ENCODE measurements at regions of chr1 and their contacts with region 1.

Region 1: GRCh38 chr1:1687846-1688245 is 4.7 kb downstream of the SLC35E2B start:
- DNase-seq: no peak
- ATAC-seq: no peak
- H3K4me3 ChIP-seq: no peak overlapping the region
- H3K4me3 Mint-ChIP-seq: no peak overlapping the region
- H3K27ac ChIP-seq: no peak overlapping the region
- H3K27ac Mint-ChIP-seq: no peak overlapping the region
- H3K4me1 ChIP-seq: peaks cover 5% of the 10 kb centered on the region
- H3K4me1 Mint-ChIP-seq: peaks cover 28% of the 10 kb centered on the region
- H3K27me3 ChIP-seq: no peaks in the 10 kb centered on the region
- H3K27me3 Mint-ChIP-seq: no peaks in the 10 kb centered on the region
- CTCF ChIP-seq: no peak

Region 2: DNA sequence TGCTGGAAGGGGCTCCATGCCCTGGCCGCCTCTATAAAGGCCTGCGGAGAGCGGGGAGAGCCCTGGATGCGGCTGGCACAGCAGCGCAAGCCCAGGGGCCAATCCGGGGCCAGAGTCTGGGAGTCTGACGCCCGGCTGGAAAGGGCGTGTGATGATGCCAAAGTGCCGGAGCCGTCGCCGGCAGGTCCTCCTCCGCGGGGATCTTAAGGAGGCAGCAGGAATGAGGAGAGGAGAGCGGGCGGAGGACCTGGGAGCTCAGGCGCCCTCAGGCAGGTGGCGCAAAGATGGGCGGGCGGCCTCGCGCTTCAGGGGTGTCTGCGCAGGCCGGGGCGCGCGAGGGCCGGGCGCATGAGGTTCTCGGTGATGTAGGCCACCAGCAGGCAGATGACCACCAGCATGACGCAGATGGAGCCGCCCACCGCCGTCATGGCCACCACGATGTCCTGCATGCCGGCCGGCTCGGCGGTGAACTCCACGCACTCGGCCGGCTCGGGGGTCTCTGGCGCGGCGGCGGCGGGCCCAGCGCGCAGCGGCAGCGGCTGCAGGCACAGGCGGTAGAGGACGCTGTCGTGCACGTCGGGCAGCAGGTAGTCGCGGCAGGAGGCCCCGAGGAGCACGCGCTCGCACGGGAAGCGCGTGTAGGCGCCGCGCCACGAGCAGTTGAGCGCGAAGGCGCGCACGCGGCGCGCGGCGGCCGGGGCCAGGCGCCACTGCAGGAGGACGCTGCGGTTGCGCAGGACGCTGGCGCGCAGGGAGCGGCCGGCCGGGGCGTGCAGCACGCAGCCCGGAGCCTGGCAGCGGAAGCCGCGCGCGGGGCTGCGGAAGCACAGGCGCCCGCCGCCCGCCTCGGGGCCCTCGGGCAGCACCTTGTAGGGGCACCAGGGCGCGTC is 88.6 kb before region 1 on chr1:
- CTCF ChIA-PET with region 1: no interaction called
- POLR2A ChIA-PET with region 1: no interaction called
- intact Hi-C with region 1: no loop called
- DNase-seq: peak in 5 of 9 experiments; percentile 33 to 72 (median 62)
- ATAC-seq: peak; percentile 60
- H3K4me3 ChIP-seq: no peak overlapping the region
- H3K4me3 Mint-ChIP-seq: peak overlapping the region; percentile 77
- H3K27ac ChIP-seq: no peak overlapping the region
- H3K27ac Mint-ChIP-seq: no peak overlapping the region
- H3K4me1 ChIP-seq: peaks cover 13% of the 10 kb centered on the region
- H3K4me1 Mint-ChIP-seq: peaks cover 9% of the 10 kb centered on the region
- H3K27me3 ChIP-seq: no peaks in the 10 kb centered on the region
- H3K27me3 Mint-ChIP-seq: no peaks in the 10 kb centered on the region
- CTCF ChIP-seq: no peak

Region 3: DNA sequence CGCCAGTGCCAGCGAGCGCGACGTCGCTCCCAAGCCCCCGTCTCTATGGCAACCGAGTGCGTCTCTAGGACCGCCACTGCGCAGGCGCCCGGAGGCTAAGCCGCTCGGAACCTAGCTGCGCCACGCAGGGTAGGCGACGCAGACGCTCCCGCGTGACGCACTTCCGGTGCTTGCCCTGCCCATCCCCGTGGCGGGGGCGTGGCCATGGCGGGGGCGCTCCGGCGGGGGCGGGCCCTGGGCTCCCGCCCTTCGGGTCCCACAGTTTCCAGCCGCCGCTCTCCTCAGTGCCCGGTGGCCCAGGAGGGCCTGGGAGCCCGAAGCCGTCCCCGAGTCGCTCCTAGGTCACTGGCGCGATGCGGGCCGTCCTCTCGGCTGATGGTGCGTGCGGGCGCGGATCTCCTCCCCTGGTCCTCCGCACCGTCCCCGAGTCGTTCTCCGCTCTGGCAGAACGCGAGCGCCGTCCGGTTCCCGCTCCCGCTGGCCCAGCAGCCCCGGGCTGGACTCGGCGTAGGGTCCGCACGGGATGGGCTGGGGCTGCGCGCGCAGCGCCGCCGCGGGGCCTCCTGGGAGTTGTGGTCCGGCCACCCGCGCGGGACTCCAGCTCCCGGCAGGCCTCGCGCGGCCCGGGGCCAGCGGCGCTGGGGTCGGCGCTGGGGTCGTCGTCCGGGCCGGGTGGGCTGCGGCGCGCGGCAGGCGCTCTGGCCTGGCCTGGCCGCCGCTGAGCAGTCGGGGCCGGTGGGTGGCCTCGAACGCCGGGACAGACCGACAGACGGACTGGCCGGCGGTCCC is 72.4 kb before region 1 on chr1 and contains the start of gene MIB2:
- CTCF ChIA-PET with region 1: no interaction called
- POLR2A ChIA-PET with region 1: no interaction called
- intact Hi-C with region 1: no loop called
- DNase-seq: peak; percentile 94 to 100 (median 98)
- ATAC-seq: peak; percentile 82
- H3K4me3 ChIP-seq: peak within 1 kb of the TSS; percentile 91 to 100
- H3K4me3 Mint-ChIP-seq: peak within 1 kb of the TSS; percentile 90
- H3K27ac ChIP-seq: peak within 1 kb of the TSS; percentile 100
- H3K27ac Mint-ChIP-seq: peak within 1 kb of the TSS; percentile 100
- H3K4me1 ChIP-seq: peaks cover 26% of the 10 kb centered on the region
- H3K4me1 Mint-ChIP-seq: peaks cover 32% of the 10 kb centered on the region
- H3K27me3 ChIP-seq: no peaks in the 10 kb centered on the region
- H3K27me3 Mint-ChIP-seq: no peaks in the 10 kb centered on the region
- CTCF ChIP-seq: no peak
- total RNA-seq, gene MIB2: 57.0 to 57.3 TPM

Region 4: GRCh38 chr1:1748686-1749321 is 61.0 kb after region 1 on chr1:
- CTCF ChIA-PET with region 1: no interaction called
- POLR2A ChIA-PET with region 1: no interaction called
- intact Hi-C with region 1: loop called in 1 of 2 experiments (anchors 5 kb)
- DNase-seq: no peak
- ATAC-seq: no peak
- H3K4me3 ChIP-seq: no peak overlapping the region
- H3K4me3 Mint-ChIP-seq: no peak overlapping the region
- H3K27ac ChIP-seq: no peak overlapping the region
- H3K27ac Mint-ChIP-seq: no peak overlapping the region
- H3K4me1 ChIP-seq: no peaks in the 10 kb centered on the region
- H3K4me1 Mint-ChIP-seq: peaks cover 2% of the 10 kb centered on the region
- H3K27me3 ChIP-seq: no peaks in the 10 kb centered on the region
- H3K27me3 Mint-ChIP-seq: no peaks in the 10 kb centered on the region
- CTCF ChIP-seq: no peak